Activated CD4-positive, alpha-beta T cell treated with anti-CD3 and anti-CD28 coated beads for 36 hours (primary cell): ENCODE measurements at regions of chr14 and their contacts with region 1.

Region 1: DNA sequence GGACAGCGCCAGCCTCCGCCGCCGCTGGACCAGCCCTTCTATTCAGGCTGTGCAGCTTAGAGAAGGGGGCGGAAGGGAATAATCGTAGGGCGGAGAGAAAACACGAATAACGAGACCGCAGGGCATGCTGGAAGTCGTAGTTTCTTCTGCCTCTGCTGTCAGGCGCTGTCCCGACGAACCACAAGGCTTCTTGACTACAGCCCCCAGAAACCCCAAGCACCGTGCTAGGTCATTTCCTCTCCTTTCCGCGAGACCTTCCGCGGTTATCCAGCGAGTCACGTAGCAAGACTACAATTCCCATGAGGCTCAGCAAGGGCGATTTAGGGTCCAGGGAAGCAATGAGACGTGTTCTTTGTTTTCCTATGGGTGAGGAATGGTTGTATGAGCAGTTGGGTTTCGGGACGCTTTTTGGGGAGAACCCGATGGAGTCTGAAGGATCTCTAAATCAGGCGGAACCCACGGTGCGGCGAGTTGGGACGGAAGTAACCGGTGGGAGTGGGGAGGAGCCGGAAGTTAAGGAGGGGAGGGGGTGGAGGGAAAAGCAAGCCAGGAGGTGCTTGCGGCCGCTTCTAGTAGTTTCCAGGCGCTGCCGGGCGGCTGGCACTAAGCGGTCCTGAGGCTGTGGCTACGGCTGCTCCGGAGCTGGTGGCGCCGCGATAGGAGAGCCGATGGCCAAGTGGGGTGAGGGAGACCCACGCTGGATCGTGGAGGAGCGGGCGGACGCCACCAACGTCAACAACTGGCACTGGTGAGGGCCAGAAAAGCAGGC is at the starts of genes AHSA1 and VIPAS39:
- DNase-seq: peak; percentile 96
- ATAC-seq: peak; percentile 96
- H3K4me3 Mint-ChIP-seq: peak within 1 kb of the TSS; percentile 88
- H3K27ac Mint-ChIP-seq: peak within 1 kb of the TSS; percentile 100
- H3K4me1 Mint-ChIP-seq: peaks cover 38% of the 10 kb centered on the region
- H3K27me3 Mint-ChIP-seq: no peaks in the 10 kb centered on the region
- total RNA-seq, gene AHSA1: 318 to 348 TPM
- total RNA-seq, gene VIPAS39: 16.4 to 20.1 TPM

Region 2: DNA sequence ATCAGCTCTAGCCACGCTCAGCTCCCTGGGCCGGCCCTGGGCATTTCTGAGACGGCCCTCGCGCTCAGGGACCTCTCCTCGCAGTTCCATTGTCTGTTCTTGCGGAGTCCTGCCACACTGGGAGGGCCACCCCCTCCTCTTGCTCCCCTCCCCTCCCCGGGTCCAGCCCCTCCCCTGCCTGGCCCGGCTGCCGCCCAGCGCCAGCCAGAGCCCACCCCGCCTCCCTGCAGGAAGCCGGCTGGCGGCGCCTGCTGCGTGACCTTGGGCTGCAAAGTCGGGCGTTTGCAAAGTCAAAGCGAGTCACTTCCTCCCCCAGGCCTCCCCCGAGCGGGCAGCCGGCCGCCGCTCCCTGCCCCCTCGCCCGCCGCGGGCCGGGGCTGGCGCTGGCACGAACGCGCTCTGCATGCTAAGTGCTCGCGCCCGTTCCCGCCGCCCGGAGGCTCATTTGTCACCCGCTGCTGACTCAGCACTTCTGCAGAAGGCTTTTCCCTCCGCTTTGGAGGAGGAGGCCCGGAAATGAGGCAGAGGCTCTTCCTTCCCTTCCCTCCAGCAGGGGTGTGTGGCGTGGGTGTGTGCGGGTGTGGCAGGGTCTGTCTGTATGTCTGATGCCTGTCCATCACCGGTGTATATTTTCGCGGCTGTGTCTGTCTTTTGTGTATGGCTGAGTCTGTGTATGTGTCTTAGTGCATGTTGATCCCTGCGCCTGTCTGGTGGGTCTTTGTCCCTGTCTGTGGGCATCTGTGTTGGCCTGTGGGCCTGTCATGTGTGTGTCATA is 501.2 kb before region 1 on chr14:
- CTCF ChIA-PET with region 1: no interaction called
- POLR2A ChIA-PET with region 1: no interaction called
- intact Hi-C with region 1: loop called in 1 of 2 experiments (anchors 10 kb)
- DNase-seq: peak; percentile 96
- ATAC-seq: peak; percentile 62
- H3K4me3 Mint-ChIP-seq: peak overlapping the region; percentile 71
- H3K27ac Mint-ChIP-seq: peak overlapping the region; percentile 91
- H3K4me1 Mint-ChIP-seq: peaks cover 81% of the 10 kb centered on the region
- H3K27me3 Mint-ChIP-seq: no peaks in the 10 kb centered on the region

Region 3: GRCh38 chr14:77301103-77301502 is 156.6 kb before region 1 on chr14:
- CTCF ChIA-PET with region 1: interaction called, 4 read pairs
- POLR2A ChIA-PET with region 1: no interaction called
- intact Hi-C with region 1: loop called in 1 of 2 experiments (anchors 5 kb)
- DNase-seq: peak; percentile 84
- ATAC-seq: no peak
- H3K4me3 Mint-ChIP-seq: no peak overlapping the region
- H3K27ac Mint-ChIP-seq: no peak overlapping the region
- H3K4me1 Mint-ChIP-seq: peaks cover 24% of the 10 kb centered on the region
- H3K27me3 Mint-ChIP-seq: no peaks in the 10 kb centered on the region

Region 4: DNA sequence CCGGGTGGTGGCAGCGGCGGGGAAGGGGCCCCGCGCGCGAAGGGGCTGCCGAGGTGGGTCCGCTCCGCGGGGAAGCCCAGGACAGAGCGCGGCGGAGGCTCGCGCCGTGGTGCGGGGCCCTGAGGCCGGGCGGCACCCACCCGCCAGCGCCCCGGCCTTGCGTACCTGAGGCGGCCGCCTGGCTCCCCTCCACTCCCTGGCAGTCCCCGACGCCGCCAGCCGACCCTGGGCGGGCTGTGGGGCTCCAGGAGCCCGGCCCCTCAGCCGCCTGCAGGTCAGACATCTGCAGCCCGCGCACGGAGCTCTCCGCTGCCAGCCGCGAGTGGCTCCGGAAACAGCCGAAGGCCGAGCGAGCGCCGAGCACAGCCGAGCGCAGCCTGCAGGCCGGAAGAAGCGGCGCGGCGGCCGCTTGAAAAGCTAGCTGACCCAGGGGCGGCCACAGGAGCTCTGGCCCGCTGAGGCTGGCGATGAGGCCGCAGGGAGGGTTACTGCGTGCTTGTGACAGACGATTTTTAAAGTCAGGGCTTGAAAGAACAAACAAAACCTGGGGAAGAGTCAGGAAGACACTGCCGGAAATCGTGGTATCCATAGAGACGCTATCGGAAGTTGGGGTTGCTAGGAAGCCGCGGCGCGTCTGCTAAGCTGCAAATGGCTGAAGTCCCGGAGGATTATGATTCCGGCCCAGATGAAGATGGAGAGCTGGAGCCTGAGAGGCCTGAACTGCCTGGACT is 80.8 kb before region 1 on chr14 and contains the starts of genes SAMD15 and TMED8:
- CTCF ChIA-PET with region 1: interaction called, 7 read pairs
- POLR2A ChIA-PET with region 1: interaction called, 3 read pairs
- intact Hi-C with region 1: loop called (anchors 1 kb)
- DNase-seq: peak; percentile 91
- ATAC-seq: peak; percentile 95
- H3K4me3 Mint-ChIP-seq: no peak within 1 kb of the TSS
- H3K27ac Mint-ChIP-seq: peak within 1 kb of the TSS; percentile 86
- H3K4me1 Mint-ChIP-seq: peaks cover 40% of the 10 kb centered on the region
- H3K27me3 Mint-ChIP-seq: no peaks in the 10 kb centered on the region
- total RNA-seq, gene SAMD15: 0.25 TPM
- total RNA-seq, gene TMED8: 25.3 to 27.9 TPM

Region 5: GRCh38 chr14:77554207-77554606 is 96.5 kb after region 1 on chr14:
- CTCF ChIA-PET with region 1: interaction called, 10 read pairs
- POLR2A ChIA-PET with region 1: no interaction called
- intact Hi-C with region 1: loop called (anchors 1 to 2 kb)
- DNase-seq: peak; percentile 33
- ATAC-seq: peak; percentile 63
- H3K4me3 Mint-ChIP-seq: no peak overlapping the region
- H3K27ac Mint-ChIP-seq: peak overlapping the region; percentile 78
- H3K4me1 Mint-ChIP-seq: peaks cover 20% of the 10 kb centered on the region
- H3K27me3 Mint-ChIP-seq: no peaks in the 10 kb centered on the region

Region 6: GRCh38 chr14:77649326-77649725 is 191.6 kb after region 1 on chr14:
- CTCF ChIA-PET with region 1: no interaction called
- POLR2A ChIA-PET with region 1: no interaction called
- intact Hi-C with region 1: no loop called
- DNase-seq: no peak
- ATAC-seq: no peak
- H3K4me3 Mint-ChIP-seq: no peak overlapping the region
- H3K27ac Mint-ChIP-seq: no peak overlapping the region
- H3K4me1 Mint-ChIP-seq: no peaks in the 10 kb centered on the region
- H3K27me3 Mint-ChIP-seq: no peaks in the 10 kb centered on the region

Region 7: GRCh38 chr14:77707724-77708408 is 250.2 kb after region 1 on chr14 and contains the starts of genes ALKBH1 and SLIRP:
- CTCF ChIA-PET with region 1: interaction called, 3 read pairs
- POLR2A ChIA-PET with region 1: no interaction called
- intact Hi-C with region 1: loop called (anchors 1 kb)
- DNase-seq: peak; percentile 93
- ATAC-seq: peak; percentile 98
- H3K4me3 Mint-ChIP-seq: peak within 1 kb of the TSS; percentile 95
- H3K27ac Mint-ChIP-seq: peak within 1 kb of the TSS; percentile 94
- H3K4me1 Mint-ChIP-seq: peaks cover 45% of the 10 kb centered on the region
- H3K27me3 Mint-ChIP-seq: no peaks in the 10 kb centered on the region
- total RNA-seq, gene ALKBH1: 16.3 to 16.8 TPM
- total RNA-seq, gene SLIRP: 143 to 156 TPM

Region 8: DNA sequence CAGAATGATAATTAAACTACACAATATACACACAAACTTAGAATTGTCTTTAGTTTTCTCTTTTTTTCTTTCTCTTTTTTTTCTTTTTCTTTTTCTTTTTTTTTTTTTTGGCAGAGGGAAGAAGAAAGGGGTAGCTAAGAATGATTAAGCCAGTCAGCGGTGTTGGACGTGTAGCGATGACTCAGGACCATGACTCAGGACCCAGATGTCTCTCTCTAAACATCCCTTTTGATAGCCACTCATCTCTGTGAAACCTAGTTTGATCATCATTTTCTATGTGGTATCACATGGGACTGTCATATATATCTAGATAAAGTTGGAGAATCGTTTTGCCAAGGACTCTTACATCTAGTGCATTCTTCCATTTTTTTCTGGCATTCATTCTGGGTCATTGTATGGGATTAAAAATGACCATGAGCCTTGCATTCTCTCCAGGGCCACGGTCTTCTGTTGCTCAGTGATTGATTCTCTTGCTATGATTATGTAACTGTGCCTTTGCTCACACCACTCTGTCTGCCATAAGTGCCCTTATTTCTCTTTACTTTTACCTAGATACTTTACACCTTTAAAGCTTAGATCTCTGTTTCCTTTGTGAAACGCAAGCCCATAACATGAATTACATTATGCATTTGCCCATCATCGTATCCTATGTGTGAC is 685.9 kb after region 1 on chr14:
- CTCF ChIA-PET with region 1: no interaction called
- POLR2A ChIA-PET with region 1: no interaction called
- intact Hi-C with region 1: no loop called
- DNase-seq: peak; percentile 28
- ATAC-seq: peak; percentile 89
- H3K4me3 Mint-ChIP-seq: no peak overlapping the region
- H3K27ac Mint-ChIP-seq: no peak overlapping the region
- H3K4me1 Mint-ChIP-seq: no peaks in the 10 kb centered on the region
- H3K27me3 Mint-ChIP-seq: peaks cover 10% of the 10 kb centered on the region